ENCODE measurements at regions of chr19 and their contacts with region 1.

Region 1: GRCh38 chr19:39445265-39446111 is at the start of gene SUPT5H:
- DNase-seq: peak; percentile 96 to 98 (median 97)
- H3K4me3 ChIP-seq: peak within 1 kb of the TSS; percentile 88
- H3K27ac ChIP-seq: peak within 1 kb of the TSS; percentile 36 to 79
- H3K4me1 ChIP-seq: peaks cover 7% of the 10 kb centered on the region
- H3K27me3 ChIP-seq: no peaks in the 10 kb centered on the region
- CTCF ChIP-seq: no peak
- EP300 ChIP-seq: no peak
- POLR2A ChIP-seq: peak; percentile 90
- total RNA-seq, gene SUPT5H: 51.4 to 127 (median 101) TPM

Region 2: GRCh38 chr19:39412100-39412866 is 33.2 kb before region 1 on chr19 and contains the start of gene PLEKHG2:
- intact Hi-C with region 1: loop called in 1 of 4 experiments (anchors 2 kb)
- DNase-seq: peak; percentile 96 to 98 (median 98)
- H3K4me3 ChIP-seq: peak within 1 kb of the TSS; percentile 97
- H3K27ac ChIP-seq: peak within 1 kb of the TSS; percentile 87 to 98
- H3K4me1 ChIP-seq: peaks cover 24% of the 10 kb centered on the region
- H3K27me3 ChIP-seq: no peaks in the 10 kb centered on the region
- CTCF ChIP-seq: peak; percentile 91 to 93 (median 92)
- EP300 ChIP-seq: peak; percentile 86
- POLR2A ChIP-seq: peak; percentile 57
- total RNA-seq, gene PLEKHG2: 8.6 to 68.0 (median 33.9) TPM

Measured in ovary (tissue), 10 donors.